Posterior vena cava (tissue), 2 donors: ENCODE measurements at regions of chr9 and their contacts with region 1.

Region 1: GRCh38 chr9:16243798-16244197 is 626.7 kb downstream of the BNC2 start:
- DNase-seq: no peak

Region 2: GRCh38 chr9:16275795-16276624 is 32.2 kb after region 1 on chr9:
- intact Hi-C with region 1: loop called in 1 of 2 experiments (anchors 1 kb)
- DNase-seq: no peak

Region 3: GRCh38 chr9:16653491-16654399 is 409.9 kb after region 1 on chr9:
- intact Hi-C with region 1: loop called in 1 of 2 experiments (anchors 1 kb)
- DNase-seq: no peak